Calu3 (cell line): ENCODE measurements at regions of chr1 and their contacts with region 1.

Region 1: DNA sequence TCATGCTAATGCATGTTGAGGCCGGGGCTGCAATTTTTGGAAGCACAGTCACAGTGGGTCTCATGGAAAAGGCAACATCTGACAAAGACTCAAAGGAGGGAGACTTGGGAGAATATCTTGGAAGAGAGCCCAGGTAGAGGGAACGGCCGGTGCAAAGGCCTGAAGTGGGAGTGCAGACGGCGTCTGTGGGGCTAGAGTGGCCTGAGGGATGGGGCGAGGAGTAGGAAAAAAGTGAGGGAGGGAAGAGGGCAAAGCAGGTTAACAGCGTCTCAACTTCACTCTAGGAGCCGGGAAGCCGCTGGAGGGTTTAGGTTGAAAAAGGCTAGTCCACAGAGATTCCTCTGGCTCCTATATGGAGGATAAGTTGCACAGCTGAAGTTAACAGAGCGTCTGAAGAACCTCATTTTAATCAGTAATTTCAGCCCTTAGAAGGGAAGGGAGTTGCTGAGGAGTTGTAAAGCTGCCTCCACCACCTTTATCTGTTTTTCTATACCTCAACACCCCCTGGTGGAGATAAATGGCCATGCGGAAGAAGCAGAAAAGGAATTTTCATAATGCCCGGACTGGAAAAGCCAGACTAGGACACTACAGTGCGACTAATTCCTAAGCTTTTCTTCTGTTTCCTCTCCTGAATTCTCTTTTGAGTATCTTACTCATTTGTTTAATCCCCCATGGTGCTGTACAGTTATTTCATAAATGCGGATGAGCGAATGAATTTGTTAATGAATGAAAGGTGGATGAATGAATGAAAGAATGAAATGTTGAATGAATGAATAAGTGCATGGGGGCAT is 78.7 kb upstream of the ZNF281 start:
- DNase-seq: peak; percentile 77
- H3K4me3 Mint-ChIP-seq: no peak overlapping the region
- H3K27ac Mint-ChIP-seq: peak overlapping the region; percentile 46
- H3K4me1 Mint-ChIP-seq: peaks cover 20% of the 10 kb centered on the region
- H3K27me3 Mint-ChIP-seq: no peaks in the 10 kb centered on the region
- CTCF ChIP-seq: peak; percentile 76

Region 2: GRCh38 chr1:200139661-200140250 is 348.8 kb before region 1 on chr1:
- CTCF ChIA-PET with region 1: no interaction called
- intact Hi-C with region 1: loop called (anchors 10 kb)
- DNase-seq: peak; percentile 46
- H3K4me3 Mint-ChIP-seq: no peak overlapping the region
- H3K27ac Mint-ChIP-seq: no peak overlapping the region
- H3K4me1 Mint-ChIP-seq: no peaks in the 10 kb centered on the region
- H3K27me3 Mint-ChIP-seq: no peaks in the 10 kb centered on the region
- CTCF ChIP-seq: peak; percentile 69

Region 3: GRCh38 chr1:200290010-200290685 is 198.4 kb before region 1 on chr1:
- CTCF ChIA-PET with region 1: interaction called, 3 read pairs
- intact Hi-C with region 1: loop called (anchors 5 kb)
- DNase-seq: peak; percentile 14
- H3K4me3 Mint-ChIP-seq: no peak overlapping the region
- H3K27ac Mint-ChIP-seq: no peak overlapping the region
- H3K4me1 Mint-ChIP-seq: no peaks in the 10 kb centered on the region
- H3K27me3 Mint-ChIP-seq: no peaks in the 10 kb centered on the region
- CTCF ChIP-seq: peak; percentile 19

Region 4: GRCh38 chr1:200409761-200410565 is 78.6 kb before region 1 on chr1 and contains the start of gene ZNF281:
- CTCF ChIA-PET with region 1: interaction called, 5 read pairs
- intact Hi-C with region 1: loop called (anchors 2 kb)
- DNase-seq: peak; percentile 98
- H3K4me3 Mint-ChIP-seq: peak within 1 kb of the TSS; percentile 99
- H3K27ac Mint-ChIP-seq: peak within 1 kb of the TSS; percentile 95
- H3K4me1 Mint-ChIP-seq: peaks cover 67% of the 10 kb centered on the region
- H3K27me3 Mint-ChIP-seq: no peaks in the 10 kb centered on the region
- CTCF ChIP-seq: no peak
- total RNA-seq, gene ZNF281: 25.8 and 26.5 TPM in 2 replicates